Mucosa of descending colon (tissue), 3 donors: ENCODE measurements at regions of chr3 and their contacts with region 1.

Region 1: GRCh38 chr3:77038468-77038929 is 1.4 kb upstream of the ROBO2 start:
- DNase-seq: peak in 2 of 3 donors; percentile 34 to 57
- ATAC-seq: peak; percentile 86
- H3K4me3 ChIP-seq: no peak overlapping the region
- H3K4me1 ChIP-seq: peaks cover 6% of the 10 kb centered on the region
- CTCF ChIP-seq: no peak

Region 2: GRCh38 chr3:77204788-77205187 is 166.3 kb after region 1 on chr3:
- intact Hi-C with region 1: no loop called
- DNase-seq: no peak
- ATAC-seq: no peak
- H3K4me3 ChIP-seq: no peak overlapping the region
- H3K4me1 ChIP-seq: no peaks in the 10 kb centered on the region
- CTCF ChIP-seq: no peak

Region 3: DNA sequence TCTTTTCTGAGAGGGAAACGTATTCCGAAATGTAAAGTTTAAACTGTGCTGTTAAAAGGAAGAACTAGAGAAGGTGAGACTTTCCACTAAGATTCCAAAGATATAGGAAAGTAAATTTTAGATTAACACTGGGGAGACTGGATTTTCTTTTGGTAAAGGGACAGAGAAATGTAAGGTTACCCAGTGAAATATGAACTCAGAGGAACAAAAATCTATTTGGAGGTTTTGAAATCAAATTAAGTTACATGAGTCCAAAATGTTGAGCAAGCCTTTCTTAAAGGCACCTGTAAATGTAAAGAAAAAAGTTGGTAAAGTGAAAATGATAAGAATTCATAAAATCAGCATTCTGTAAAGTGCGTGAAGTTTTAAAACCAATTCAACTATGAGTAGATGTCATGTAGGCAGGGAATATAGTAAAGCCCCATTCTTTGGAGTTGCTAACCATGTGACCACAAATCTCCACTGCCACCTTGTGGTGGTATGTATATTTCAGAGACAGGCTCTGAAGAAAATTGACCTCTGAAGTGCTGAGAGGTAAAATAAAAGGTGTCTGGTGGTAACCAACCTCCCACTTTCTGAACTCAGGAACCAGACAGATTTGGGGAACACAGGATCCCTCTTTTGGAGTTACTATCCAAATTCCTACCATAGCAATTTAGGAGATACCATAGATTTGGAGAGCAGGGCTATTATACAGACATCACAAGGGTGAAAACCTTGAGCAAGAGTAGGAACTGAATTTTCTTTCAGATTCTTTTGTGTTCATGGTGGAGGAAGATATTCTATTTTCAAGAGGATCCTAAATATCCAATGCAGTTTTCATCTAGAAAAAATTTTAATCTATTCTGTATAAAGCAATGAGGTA is 216.7 kb after region 1 on chr3:
- intact Hi-C with region 1: loop called (anchors 2 to 5 kb)
- DNase-seq: peak in 1 of 3 donors; percentile 74
- ATAC-seq: peak; percentile 79
- H3K4me3 ChIP-seq: no peak overlapping the region
- H3K4me1 ChIP-seq: no peaks in the 10 kb centered on the region
- CTCF ChIP-seq: no peak